Calu3 (cell line): ENCODE measurements at regions of chr14 and their contacts with region 1.

Region 1: GRCh38 chr14:50714450-50715073 is 46.5 kb upstream of the SAV1 start:
- DNase-seq: peak; percentile 21
- H3K4me3 Mint-ChIP-seq: no peak overlapping the region
- H3K27ac Mint-ChIP-seq: no peak overlapping the region
- H3K4me1 Mint-ChIP-seq: no peaks in the 10 kb centered on the region
- H3K27me3 Mint-ChIP-seq: no peaks in the 10 kb centered on the region
- CTCF ChIP-seq: peak; percentile 12

Region 2: DNA sequence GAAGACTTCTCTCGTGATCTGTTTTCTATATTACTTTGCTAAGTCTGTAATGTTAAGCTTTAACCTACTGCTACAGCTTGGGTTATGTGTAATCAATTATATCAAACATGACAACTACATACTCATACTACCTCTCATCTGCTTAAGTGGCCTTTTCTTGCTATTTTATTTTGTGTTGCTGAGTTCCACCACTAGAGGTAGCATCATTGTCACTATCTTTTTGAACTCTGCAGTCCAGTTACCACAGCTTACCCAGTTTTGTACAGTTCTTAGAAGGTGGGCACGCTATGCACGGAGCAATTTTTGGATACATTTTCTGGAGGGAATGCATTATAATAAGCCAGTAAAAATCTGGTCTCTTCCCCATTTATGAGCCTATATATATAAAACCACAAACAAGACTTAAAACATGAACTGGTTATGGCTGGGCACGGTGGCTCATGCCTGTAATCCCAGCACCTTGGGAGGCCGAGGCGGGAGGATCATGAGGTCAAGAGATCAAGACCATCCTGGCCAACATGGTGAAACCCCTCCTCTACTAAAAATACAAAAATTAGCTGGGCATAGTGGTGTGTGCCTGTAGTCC is 94.9 kb before region 1 on chr14:
- CTCF ChIA-PET with region 1: interaction called, 12 read pairs
- intact Hi-C with region 1: no loop called
- DNase-seq: no peak
- H3K4me3 Mint-ChIP-seq: no peak overlapping the region
- H3K27ac Mint-ChIP-seq: no peak overlapping the region
- H3K4me1 Mint-ChIP-seq: no peaks in the 10 kb centered on the region
- H3K27me3 Mint-ChIP-seq: no peaks in the 10 kb centered on the region
- CTCF ChIP-seq: peak; percentile 43

Region 3: GRCh38 chr14:50667996-50668825 is 46.4 kb before region 1 on chr14 and contains the start of gene SAV1:
- CTCF ChIA-PET with region 1: interaction called, 5 read pairs
- intact Hi-C with region 1: loop called (anchors 10 kb)
- DNase-seq: peak; percentile 85
- H3K4me3 Mint-ChIP-seq: no peak within 1 kb of the TSS
- H3K27ac Mint-ChIP-seq: no peak within 1 kb of the TSS
- H3K4me1 Mint-ChIP-seq: peaks cover 15% of the 10 kb centered on the region
- H3K27me3 Mint-ChIP-seq: no peaks in the 10 kb centered on the region
- CTCF ChIP-seq: no peak
- total RNA-seq, gene SAV1: 45.7 and 62.2 TPM in 2 replicates

Region 4: DNA sequence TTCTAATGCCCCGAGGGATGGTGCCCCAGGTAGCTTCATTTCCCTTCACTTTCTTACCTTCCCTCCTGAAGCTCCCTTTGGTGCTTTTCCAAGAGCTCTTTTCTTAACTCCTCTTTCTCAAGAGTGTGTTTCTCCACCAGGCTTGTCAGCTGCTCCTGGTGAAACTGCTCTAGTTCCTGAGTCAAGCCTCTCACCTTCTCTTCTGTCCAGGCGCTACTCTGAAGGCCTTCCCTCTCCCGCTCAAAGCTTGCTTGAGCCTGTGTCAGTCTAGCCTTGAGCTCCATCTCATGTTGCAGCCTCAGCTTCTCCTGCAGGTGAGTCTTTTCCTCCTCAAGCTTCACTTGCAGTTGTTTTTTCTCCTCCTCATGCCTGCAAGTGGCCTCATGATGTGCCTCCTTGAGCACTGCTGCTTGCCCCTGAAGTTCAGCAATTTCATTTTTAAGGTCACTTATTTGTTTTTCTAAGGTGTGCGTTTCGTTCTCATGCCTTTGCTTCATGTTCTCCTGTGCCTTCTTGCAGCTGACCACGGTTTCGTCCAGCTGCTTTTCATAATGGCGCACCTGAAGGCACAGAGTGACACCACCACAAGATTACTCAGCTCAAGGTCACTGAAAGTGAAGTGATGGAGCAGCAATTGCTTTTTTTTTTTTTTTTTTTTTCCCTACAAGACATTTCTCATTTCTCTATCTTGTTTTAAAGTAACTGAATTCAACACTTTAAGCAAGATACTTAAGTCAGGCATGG is 45.4 kb after region 1 on chr14:
- CTCF ChIA-PET with region 1: interaction called, 10 read pairs
- intact Hi-C with region 1: no loop called
- DNase-seq: no peak
- H3K4me3 Mint-ChIP-seq: no peak overlapping the region
- H3K27ac Mint-ChIP-seq: no peak overlapping the region
- H3K4me1 Mint-ChIP-seq: no peaks in the 10 kb centered on the region
- H3K27me3 Mint-ChIP-seq: no peaks in the 10 kb centered on the region
- CTCF ChIP-seq: no peak

Region 5: DNA sequence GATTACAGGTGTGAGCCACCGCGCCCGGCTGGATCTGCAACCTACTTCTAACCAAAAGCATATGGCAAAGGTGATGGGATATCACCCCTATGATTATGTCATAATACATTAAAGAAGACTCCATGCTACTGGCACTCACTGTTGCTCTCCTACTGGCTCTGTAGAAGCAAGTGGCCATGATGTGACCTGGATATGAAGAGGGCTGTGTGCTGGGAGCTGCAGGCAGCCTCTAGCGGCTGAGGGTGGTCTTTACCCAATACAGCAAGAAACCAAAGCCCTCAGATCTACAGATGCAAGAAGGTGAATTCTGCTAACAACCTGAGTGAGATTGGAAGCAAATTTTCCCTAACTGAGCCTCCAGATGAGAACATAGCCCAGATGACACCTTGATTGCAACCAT is 414.6 kb after region 1 on chr14:
- CTCF ChIA-PET with region 1: no interaction called
- intact Hi-C with region 1: no loop called
- DNase-seq: no peak
- H3K4me3 Mint-ChIP-seq: no peak overlapping the region
- H3K27ac Mint-ChIP-seq: no peak overlapping the region
- H3K4me1 Mint-ChIP-seq: no peaks in the 10 kb centered on the region
- H3K27me3 Mint-ChIP-seq: no peaks in the 10 kb centered on the region
- CTCF ChIP-seq: no peak